ENCODE measurements at regions of chr14 and their contacts with region 1.

Region 1: GRCh38 chr14:24160850-24161804 is at the start of gene IRF9:
- DNase-seq: peak; percentile 99
- H3K4me3 Mint-ChIP-seq: peak within 1 kb of the TSS; percentile 99
- H3K27ac Mint-ChIP-seq: peak within 1 kb of the TSS; percentile 100
- H3K4me1 Mint-ChIP-seq: peaks cover 43% of the 10 kb centered on the region
- H3K27me3 Mint-ChIP-seq: no peaks in the 10 kb centered on the region
- total RNA-seq, gene IRF9: 202 to 212 TPM

Region 2: DNA sequence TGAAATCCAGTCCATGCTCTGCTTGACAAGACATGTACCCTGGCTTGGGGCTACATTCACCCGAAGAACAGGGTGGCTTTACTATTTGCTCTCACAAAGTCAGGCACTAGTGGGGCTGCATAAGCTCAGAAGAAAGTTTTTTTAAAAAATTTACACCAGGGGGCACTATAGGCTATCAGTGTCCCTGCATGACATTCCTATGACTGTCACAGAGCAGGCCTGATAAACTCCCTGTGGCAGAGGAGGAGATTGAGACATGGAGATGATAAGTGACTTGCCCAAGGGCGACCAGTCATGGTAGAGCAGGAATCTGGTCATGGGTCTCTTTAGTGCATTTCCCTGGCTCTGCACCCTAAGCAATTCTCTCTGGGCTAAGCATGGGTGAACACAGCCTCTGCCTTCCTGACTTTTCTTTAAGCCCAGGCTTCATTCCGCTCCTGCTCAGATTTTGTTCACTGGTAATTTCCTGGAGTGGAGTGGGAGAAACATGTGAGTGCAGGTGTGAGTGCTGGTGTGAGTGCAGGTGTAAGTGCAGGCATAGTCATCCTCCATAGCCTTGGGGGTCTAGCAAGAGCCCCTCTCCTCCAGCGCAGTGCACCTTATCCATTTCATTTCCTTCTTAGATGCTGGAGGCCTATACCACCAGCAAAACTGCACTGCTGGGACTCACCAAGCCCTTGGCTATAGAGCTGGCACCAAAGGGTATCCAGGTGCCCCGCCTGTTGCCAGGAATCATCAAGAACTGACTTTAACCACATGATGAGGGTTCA is 433.4 kb before region 1 on chr14:
- CTCF ChIA-PET with region 1: no interaction called
- intact Hi-C with region 1: loop called (anchors 5 kb)
- DNase-seq: no peak
- H3K4me3 Mint-ChIP-seq: no peak overlapping the region
- H3K27ac Mint-ChIP-seq: no peak overlapping the region
- H3K4me1 Mint-ChIP-seq: no peaks in the 10 kb centered on the region
- H3K27me3 Mint-ChIP-seq: no peaks in the 10 kb centered on the region

Region 3: GRCh38 chr14:24051789-24052655 is 109.1 kb before region 1 on chr14 and contains the start of gene CARMIL3:
- CTCF ChIA-PET with region 1: interaction called, 5 read pairs
- intact Hi-C with region 1: loop called (anchors 1 kb)
- DNase-seq: peak; percentile 60
- H3K4me3 Mint-ChIP-seq: peak within 1 kb of the TSS; percentile 65
- H3K27ac Mint-ChIP-seq: peak within 1 kb of the TSS; percentile 28
- H3K4me1 Mint-ChIP-seq: peaks cover 18% of the 10 kb centered on the region
- H3K27me3 Mint-ChIP-seq: peaks cover 2% of the 10 kb centered on the region
- total RNA-seq, gene CARMIL3: 0.48 to 0.99 TPM

Region 4: DNA sequence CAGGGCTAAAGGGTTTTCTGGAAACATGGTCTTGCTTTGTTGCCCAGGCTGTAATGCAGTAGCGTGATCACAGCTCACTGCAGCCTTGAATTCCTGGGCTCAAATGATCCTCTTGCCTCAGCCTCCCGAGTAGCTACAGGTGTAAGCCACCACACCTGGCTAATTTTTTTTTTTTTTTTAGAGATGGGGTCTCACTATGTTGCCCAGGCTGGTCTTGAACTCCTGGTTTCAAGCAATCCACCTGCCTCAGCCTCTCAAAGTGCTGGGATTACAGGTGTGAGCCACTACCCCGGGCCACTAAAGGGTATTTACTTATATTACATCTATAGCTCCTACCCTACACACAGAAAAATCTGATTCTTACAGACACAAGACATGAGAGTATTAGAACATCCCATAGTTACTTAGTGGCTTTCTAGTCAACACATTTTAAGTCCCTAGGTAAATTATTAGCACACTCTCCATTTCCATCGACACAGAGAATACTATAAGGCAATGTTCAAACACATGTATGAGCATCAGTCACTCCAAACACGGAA is 52.7 kb before region 1 on chr14:
- CTCF ChIA-PET with region 1: interaction called, 31 read pairs
- intact Hi-C with region 1: loop called (anchors 1 kb)
- DNase-seq: no peak
- H3K4me3 Mint-ChIP-seq: peak overlapping the region; percentile 50
- H3K27ac Mint-ChIP-seq: peak overlapping the region; percentile 97
- H3K4me1 Mint-ChIP-seq: peaks cover 10% of the 10 kb centered on the region
- H3K27me3 Mint-ChIP-seq: no peaks in the 10 kb centered on the region

Region 5: DNA sequence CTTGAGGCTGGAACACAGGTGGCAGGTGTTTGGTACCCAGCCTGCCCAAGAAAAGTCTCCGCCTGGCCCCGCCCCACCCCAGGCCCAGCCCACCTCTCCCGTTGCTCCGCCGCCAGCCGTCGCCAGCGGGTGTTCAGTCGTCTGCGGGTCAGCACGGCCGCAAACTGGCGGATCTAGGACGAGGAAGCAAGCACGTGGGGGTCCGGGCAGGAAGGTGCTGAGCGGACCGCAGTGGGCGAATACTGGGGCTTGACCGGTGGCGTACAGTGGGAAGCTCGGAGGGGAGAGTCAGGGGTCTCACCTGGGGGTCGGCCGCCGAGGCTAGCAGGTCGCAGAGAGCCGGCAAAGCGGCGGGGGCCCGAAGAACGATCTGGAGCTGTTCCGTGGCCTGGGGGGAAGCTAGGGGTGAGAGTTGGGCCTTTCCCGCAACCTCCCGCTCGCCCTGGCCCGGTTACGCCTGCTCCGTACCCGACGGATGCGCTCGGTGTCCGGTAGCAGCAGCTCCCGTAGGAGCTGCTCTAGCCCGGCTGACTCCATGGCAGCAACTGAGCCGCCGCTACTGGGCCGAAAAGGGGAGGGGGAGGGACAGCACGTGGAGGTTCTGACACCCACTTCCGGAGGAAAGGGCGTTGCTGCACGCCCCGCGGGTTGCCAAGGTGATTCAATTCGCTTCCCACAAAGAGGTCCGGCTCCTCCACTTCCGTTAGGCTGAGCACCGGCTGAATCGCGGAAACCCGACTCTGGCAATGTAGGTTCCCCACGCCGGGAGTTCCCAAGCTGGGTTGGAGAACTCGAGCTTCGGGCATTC is 27.3 kb after region 1 on chr14 and contains the start of gene IPO4:
- CTCF ChIA-PET with region 1: interaction called, 13 read pairs
- intact Hi-C with region 1: loop called (anchors 1 kb)
- DNase-seq: peak; percentile 97
- H3K4me3 Mint-ChIP-seq: peak within 1 kb of the TSS; percentile 85
- H3K27ac Mint-ChIP-seq: peak within 1 kb of the TSS; percentile 78
- H3K4me1 Mint-ChIP-seq: peaks cover 46% of the 10 kb centered on the region
- H3K27me3 Mint-ChIP-seq: no peaks in the 10 kb centered on the region
- total RNA-seq, gene IPO4: 64.2 to 74.5 TPM

Region 6: DNA sequence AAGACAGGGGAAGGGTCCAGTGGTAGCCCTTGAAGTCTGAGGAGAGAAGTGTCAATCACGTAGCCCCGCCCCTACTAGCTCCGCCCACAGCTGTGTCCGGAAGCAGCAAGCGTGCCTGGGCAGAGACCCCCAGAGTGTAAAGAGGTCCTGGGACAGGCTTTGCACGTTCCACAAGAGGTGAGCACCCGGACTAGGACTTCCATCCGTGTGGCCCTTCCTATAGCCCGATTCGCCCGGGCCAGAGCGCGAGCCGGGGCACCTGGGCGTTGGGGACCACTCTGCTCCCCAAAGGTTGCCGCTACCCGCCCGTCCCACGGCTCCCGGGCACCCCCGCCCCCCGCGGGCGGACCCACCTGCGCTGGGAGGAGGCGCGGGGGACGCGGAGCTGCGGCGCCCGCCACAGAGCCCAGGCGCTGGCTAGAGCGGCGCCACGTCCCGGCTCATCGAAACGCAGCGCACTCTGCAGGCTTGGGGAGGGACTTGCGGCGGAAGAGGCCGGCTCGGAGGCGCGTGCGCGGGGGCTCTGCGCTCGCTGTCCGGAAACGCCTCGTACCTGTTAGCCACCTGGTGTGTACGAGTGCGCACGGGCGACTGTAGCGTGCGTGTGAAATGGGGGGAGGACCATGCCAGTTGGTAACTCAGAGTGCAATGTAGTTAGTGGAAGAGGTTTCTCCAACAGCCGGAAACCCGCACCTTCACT is 110.2 kb after region 1 on chr14 and contains the start of gene RABGGTA:
- CTCF ChIA-PET with region 1: no interaction called
- intact Hi-C with region 1: loop called (anchors 1 kb)
- DNase-seq: peak; percentile 94
- H3K4me3 Mint-ChIP-seq: peak within 1 kb of the TSS; percentile 78
- H3K27ac Mint-ChIP-seq: peak within 1 kb of the TSS; percentile 95
- H3K4me1 Mint-ChIP-seq: peaks cover 43% of the 10 kb centered on the region
- H3K27me3 Mint-ChIP-seq: no peaks in the 10 kb centered on the region
- total RNA-seq, gene RABGGTA: 74.9 to 76.2 TPM